Calu3 (cell line): ENCODE measurements at regions of chr3 and their contacts with region 1.

Region 1: DNA sequence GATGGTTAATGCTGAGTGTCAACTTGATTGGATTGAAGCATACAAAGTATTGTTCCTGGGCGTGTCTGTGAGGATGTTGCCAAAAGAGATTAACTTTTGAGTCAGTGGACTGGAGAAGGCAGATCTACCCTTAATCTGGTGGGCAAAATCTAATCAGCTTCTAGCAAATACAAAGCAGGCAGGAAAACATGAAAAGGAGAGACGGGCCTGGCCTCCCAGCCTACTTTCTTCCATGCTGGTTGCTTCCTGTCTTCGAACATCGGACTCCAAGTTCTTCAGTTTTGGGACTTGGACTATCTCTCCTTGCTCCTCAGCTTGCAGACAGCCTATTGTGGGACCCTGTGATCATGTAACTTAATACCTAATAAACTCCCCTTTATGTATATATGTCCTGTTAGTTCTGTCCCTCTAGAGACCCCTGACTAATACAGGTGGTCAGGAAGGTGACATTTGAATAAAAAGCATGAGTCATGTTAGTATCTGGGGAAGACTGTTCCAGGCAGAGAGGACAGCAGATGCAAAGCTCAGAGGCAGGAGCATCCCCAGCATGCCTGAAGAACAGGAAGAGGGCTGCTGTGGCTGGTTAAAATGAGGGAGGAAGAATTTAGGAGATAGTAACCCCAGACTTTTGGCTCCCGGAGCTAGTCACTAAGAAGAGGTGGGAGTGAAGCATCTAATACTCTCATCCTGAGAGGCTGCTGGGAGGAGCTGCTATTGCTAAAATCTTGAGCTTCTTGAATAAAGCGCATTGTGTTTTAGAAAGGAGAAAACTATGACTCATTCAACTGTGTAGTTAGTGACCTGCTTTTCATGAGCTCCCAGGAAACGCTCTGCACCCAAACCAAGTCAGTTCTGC is 207.4 kb upstream of the HES1 start:
- DNase-seq: peak; percentile 62
- H3K4me3 Mint-ChIP-seq: peak overlapping the region; percentile 20
- H3K27ac Mint-ChIP-seq: peak overlapping the region; percentile 82
- H3K4me1 Mint-ChIP-seq: peaks cover 29% of the 10 kb centered on the region
- H3K27me3 Mint-ChIP-seq: no peaks in the 10 kb centered on the region
- CTCF ChIP-seq: no peak

Region 2: DNA sequence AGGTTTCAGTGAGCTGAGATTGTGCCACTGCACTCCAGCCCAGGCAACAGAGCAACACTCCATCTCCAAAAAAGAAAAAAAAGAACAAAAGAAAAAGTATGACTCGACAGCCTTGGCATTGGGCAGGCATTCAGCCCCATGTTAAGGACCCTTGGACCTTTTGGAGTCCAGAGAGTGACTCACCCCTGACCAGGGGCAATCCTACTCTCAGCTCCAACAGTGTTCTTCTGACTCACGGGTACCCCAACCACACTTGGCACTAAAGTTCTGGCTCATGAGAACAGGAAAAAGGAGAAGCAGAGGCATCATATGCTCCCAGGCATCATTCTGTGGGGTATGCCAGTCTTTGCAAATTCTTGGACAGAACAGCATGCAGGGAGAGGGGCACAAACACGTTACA is 45.0 kb before region 1 on chr3:
- CTCF ChIA-PET with region 1: no interaction called
- intact Hi-C with region 1: no loop called
- DNase-seq: no peak
- H3K4me3 Mint-ChIP-seq: no peak overlapping the region
- H3K27ac Mint-ChIP-seq: peak overlapping the region; percentile 51
- H3K4me1 Mint-ChIP-seq: peaks cover 75% of the 10 kb centered on the region
- H3K27me3 Mint-ChIP-seq: no peaks in the 10 kb centered on the region
- CTCF ChIP-seq: no peak

Region 3: DNA sequence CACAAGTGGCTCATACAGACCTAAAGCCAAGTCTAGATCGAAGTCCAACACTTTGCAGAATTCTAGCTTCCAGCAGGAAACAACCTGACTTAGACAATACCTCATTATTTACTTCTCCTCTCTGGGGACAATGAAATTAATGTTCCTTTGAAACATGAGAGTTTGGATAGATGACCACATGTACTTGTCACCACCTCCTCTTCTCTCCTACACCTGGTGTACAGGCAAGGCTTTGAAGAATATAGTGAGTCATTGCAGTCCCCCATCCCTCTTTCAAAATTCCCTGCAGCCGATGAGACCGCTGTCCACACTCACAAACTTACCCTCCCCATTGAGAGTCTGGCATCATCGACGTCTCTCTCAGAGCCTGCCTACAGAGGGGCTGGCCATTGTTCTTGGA is 18.4 kb after region 1 on chr3:
- CTCF ChIA-PET with region 1: interaction called, 15 read pairs
- intact Hi-C with region 1: no loop called
- DNase-seq: peak; percentile 72
- H3K4me3 Mint-ChIP-seq: no peak overlapping the region
- H3K27ac Mint-ChIP-seq: peak overlapping the region; percentile 52
- H3K4me1 Mint-ChIP-seq: peaks cover 42% of the 10 kb centered on the region
- H3K27me3 Mint-ChIP-seq: no peaks in the 10 kb centered on the region
- CTCF ChIP-seq: no peak

Region 4: DNA sequence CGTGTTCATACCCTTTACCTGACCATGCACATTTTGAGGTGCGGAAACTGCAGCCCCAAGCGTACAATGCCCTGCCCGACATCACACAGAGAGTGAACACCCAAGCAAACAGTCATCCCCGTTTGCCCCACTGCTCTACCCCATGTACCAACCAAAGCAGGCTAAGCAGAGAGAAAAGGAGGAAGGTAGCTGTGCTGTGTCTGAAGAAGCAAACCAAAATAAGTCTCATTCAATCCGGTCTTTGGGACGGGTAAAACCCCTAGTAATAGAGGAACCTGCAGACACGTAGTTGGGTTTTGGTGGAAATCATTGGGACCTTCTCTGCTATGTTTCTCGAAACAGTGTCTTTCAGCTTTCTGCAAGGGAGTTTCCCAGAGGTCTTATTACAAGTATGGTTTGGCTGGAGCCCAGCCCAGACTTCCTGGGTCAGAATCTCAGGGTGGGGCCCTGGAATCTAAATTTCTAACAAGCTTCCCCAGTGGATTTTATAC is 42.7 kb after region 1 on chr3:
- CTCF ChIA-PET with region 1: interaction called, 3 read pairs
- intact Hi-C with region 1: loop called (anchors 2 kb)
- DNase-seq: peak; percentile 66
- H3K4me3 Mint-ChIP-seq: peak overlapping the region; percentile 56
- H3K27ac Mint-ChIP-seq: peak overlapping the region; percentile 29
- H3K4me1 Mint-ChIP-seq: peaks cover 60% of the 10 kb centered on the region
- H3K27me3 Mint-ChIP-seq: no peaks in the 10 kb centered on the region
- CTCF ChIP-seq: no peak